HEK293 (cell line): ENCODE measurements at regions of chr6 and their contacts with region 1.

Region 1: GRCh38 chr6:134882426-134883038 is 67.4 kb downstream of the ALDH8A1 start:
- H3K4me3 ChIP-seq: no peak overlapping the region
- H3K27ac ChIP-seq: no peak overlapping the region
- H3K4me1 ChIP-seq: no peaks in the 10 kb centered on the region
- CTCF ChIP-seq: peak; percentile 72

Region 2: GRCh38 chr6:134123666-134124208 is 758.8 kb before region 1 on chr6:
- CTCF ChIA-PET with region 1: interaction called, 21 read pairs
- POLR2A ChIA-PET with region 1: no interaction called
- H3K4me3 ChIP-seq: no peak overlapping the region
- H3K27ac ChIP-seq: no peak overlapping the region
- H3K4me1 ChIP-seq: no peaks in the 10 kb centered on the region
- CTCF ChIP-seq: peak; percentile 17

Region 3: DNA sequence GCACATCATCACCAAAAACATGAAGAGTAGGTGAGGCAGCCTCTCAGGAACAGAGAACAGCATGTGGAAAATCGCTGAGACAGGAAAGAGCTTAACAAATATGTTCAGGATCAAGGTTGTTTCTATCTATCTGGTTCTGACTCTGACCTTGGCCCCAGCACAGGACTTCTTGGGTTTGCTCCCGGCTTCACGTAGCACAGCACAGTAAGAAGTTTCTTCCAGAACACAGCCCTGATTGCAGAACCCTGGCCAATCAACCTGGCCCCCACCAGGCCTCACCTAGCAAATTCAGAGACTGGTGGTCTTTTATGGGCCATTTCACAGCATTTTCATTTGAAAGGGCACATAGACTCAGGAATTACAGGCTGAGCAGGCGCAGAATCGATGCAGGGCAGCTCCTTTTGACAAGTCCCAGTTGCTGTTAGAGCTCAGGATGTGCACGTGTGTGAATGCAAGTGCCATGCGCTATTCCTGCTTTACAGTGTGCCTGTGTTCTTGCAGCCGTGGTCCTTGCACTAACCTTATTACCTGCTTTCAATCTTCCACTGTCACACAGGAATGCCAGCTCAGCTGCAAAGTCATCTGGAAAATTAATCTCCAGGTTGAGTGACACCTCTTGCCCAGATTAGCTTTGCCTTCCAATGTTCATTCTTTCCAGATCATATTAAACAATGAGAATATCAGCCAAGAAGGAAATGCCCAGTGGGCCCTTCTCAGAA is 729.6 kb before region 1 on chr6:
- CTCF ChIA-PET with region 1: interaction called, 43 read pairs
- POLR2A ChIA-PET with region 1: no interaction called
- H3K4me3 ChIP-seq: no peak overlapping the region
- H3K27ac ChIP-seq: no peak overlapping the region
- H3K4me1 ChIP-seq: no peaks in the 10 kb centered on the region
- CTCF ChIP-seq: no peak

Region 4: GRCh38 chr6:134174672-134175198 is 707.8 kb before region 1 on chr6:
- CTCF ChIA-PET with region 1: interaction called, 11 read pairs
- POLR2A ChIA-PET with region 1: no interaction called
- H3K4me3 ChIP-seq: peak overlapping the region; percentile 73
- H3K27ac ChIP-seq: peak overlapping the region; percentile 85
- H3K4me1 ChIP-seq: no peaks in the 10 kb centered on the region
- CTCF ChIP-seq: peak; percentile 2; the same call in 1 of the 2 replicates

Region 5: DNA sequence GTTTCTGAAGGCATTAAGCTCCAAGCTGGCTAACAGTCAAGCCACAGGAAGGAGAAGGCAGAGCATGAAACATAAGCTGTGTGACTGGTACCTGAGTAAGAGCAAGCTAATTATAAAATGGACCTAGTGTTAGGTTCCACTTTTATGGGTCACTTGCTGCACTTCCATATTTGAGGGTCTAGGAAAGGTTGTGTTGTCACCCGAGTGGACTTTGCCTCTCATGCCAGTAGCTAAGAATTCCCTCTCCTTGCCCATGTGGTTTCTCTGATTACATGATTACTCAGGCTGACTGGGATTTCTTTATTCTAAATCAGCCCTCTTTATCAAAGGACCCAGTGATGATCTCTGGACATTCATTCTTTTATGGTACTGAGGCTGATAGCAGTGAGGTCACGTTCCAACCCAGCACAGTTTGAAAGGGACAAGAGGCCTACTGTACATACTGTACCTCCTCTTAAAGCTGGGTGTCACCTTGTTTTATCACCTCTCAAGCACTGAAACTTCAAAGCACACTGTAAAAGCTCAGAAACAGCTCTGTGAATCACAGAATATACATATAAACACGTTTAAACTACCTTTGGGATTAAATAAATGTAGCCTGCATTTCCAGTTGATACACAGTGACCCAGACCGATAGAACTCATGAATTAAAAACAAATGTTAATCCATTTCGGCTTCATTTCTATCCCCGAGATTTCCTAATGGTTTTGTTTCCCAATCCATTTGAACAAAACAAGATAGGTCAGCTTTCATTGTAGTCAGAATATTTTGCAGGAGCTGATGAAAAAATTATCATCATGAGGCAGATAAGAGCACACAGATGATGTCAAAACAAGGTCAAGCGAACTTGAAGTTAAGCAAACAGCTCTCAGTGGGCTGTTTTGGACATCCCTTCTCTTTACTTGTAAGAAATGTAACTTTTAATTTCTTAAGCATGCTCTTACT is 29.1 kb before region 1 on chr6:
- CTCF ChIA-PET with region 1: interaction called, 10 read pairs
- POLR2A ChIA-PET with region 1: no interaction called
- H3K4me3 ChIP-seq: no peak overlapping the region
- H3K27ac ChIP-seq: no peak overlapping the region
- H3K4me1 ChIP-seq: peaks cover 3% of the 10 kb centered on the region; the same call in 1 of the 2 replicates
- CTCF ChIP-seq: no peak

Region 6: GRCh38 chr6:134896900-134897299 is 14.4 kb after region 1 on chr6:
- CTCF ChIA-PET with region 1: interaction called, 18 read pairs
- POLR2A ChIA-PET with region 1: no interaction called
- H3K4me3 ChIP-seq: no peak overlapping the region
- H3K27ac ChIP-seq: no peak overlapping the region
- H3K4me1 ChIP-seq: no peaks in the 10 kb centered on the region
- CTCF ChIP-seq: no peak